IMR-90 (cell line): ENCODE measurements at regions of chr4 and their contacts with region 1.

Region 1: DNA sequence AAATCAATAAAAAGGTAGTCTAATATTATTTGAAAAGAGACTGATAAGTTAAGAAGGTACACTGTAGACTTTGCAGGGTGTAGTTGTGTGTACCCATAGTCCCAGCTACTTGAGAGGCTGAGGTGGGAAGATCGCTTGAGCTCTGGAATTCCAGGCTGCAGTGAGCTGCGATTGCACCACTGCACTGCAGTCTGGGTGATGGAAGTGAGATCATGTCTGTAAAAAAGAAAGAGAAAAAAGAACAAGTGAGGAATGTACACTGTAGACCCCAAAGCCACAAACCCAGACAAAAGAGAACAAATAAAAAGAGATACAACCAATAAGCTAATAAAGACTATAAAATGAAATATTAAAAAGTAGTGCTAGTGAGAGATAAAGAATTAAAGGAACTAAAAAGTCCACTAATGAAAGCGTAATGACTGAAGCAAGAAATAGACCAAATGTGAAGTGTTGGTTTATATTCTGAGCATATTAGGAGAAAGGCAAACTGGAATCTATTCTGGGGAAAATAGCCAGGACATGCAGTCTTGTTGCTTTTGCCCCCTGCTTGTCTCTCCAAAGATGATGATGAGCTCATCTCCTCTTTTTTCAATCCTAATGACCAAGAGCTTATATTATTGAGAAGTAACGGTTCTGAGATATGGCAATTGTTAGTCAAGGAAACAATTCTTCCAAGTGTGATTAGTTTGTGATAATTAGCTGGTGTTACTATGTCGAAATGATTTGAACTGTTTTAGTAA is 19.1 kb downstream of the GSX2 start:
- DNase-seq: peak; percentile 32
- ATAC-seq: peak; percentile 63
- H3K4me3 ChIP-seq: no peak overlapping the region
- H3K27ac ChIP-seq: no peak overlapping the region
- H3K4me1 ChIP-seq: no peaks in the 10 kb centered on the region
- H3K27me3 ChIP-seq: no peaks in the 10 kb centered on the region
- CTCF ChIP-seq: no peak
- POLR2A ChIP-seq: no peak
- RAD21 ChIP-seq: no peak

Region 2: DNA sequence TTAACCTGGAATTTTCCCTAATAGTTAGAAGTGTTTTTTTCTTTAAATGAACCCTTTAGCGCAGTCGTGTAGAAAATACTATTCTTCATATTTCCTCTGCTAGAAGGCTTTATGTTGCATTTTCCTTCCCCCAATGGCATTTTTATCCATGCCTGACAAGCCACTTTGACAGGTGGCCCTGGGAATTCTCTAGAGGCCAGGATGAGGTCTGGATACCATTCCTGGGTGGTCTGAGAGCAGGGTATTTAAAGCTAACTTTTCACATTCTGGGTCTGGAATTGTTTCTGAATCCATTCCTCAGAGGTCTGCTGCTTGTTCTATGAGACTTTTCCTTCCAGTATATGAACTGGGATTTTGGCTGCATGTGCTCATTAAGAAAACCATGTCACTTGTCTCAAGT is 78.9 kb after region 1 on chr4:
- CTCF ChIA-PET with region 1: no interaction called
- POLR2A ChIA-PET with region 1: no interaction called
- dilution Hi-C with region 1: no loop called
- in situ Hi-C with region 1: no loop called
- intact Hi-C with region 1: loop called (anchors 5 kb)
- DNase-seq: no peak
- ATAC-seq: no peak
- H3K4me3 ChIP-seq: no peak overlapping the region
- H3K27ac ChIP-seq: no peak overlapping the region
- H3K4me1 ChIP-seq: peaks cover 7% of the 10 kb centered on the region
- H3K27me3 ChIP-seq: no peaks in the 10 kb centered on the region
- CTCF ChIP-seq: no peak
- POLR2A ChIP-seq: no peak
- RAD21 ChIP-seq: no peak

Region 3: DNA sequence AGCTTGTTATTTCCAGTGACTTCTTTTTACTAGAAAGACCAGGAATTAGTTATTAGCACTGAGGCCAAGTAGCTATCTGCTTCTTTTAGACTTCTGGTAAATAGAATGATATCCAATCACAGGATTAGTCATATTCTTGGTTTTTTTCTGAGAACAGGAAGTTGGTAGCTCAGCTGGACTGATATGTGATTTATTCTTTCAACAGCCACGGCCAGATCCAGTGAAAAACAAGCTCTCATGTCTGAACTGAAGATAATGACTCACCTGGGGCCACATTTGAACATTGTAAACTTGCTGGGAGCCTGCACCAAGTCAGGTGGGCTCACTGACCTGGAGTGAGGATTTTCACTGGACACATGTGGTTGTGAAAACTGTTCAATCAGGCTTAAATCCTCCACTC is 158.7 kb after region 1 on chr4:
- CTCF ChIA-PET with region 1: no interaction called
- POLR2A ChIA-PET with region 1: no interaction called
- dilution Hi-C with region 1: no loop called
- in situ Hi-C with region 1: no loop called
- intact Hi-C with region 1: no loop called
- DNase-seq: peak; percentile 92
- ATAC-seq: peak; percentile 25
- H3K4me3 ChIP-seq: no peak overlapping the region
- H3K27ac ChIP-seq: peak overlapping the region; percentile 60
- H3K4me1 ChIP-seq: peaks cover 17% of the 10 kb centered on the region
- H3K27me3 ChIP-seq: no peaks in the 10 kb centered on the region
- CTCF ChIP-seq: no peak
- POLR2A ChIP-seq: no peak
- RAD21 ChIP-seq: no peak; the same call in 1 of the 2 replicates